Gastrocnemius medialis (tissue), 4 donors: ENCODE measurements at regions of chr14 and their contacts with region 1.

Region 1: GRCh38 chr14:55026793-55027561 is at the starts of genes SOCS4 and WDHD1:
- DNase-seq: peak; percentile 91
- ATAC-seq: peak; percentile 99
- H3K4me3 ChIP-seq: peak within 1 kb of the TSS; percentile 75 to 85 (median 80)
- H3K27ac ChIP-seq: peak within 1 kb of the TSS; percentile 84 to 94 (median 88)
- H3K4me1 ChIP-seq: peaks cover 25 to 29% of the 10 kb centered on the region in 2 donors
- H3K27me3 ChIP-seq: no peaks in the 10 kb centered on the region
- CTCF ChIP-seq: peak in 3 of 5 experiments; percentile 21 to 24 (median 22)
- POLR2A ChIP-seq: peak; percentile 61 to 65
- total RNA-seq, gene SOCS4: 9.7 to 19.3 (median 14.3) TPM
- total RNA-seq, gene WDHD1: 0.72 to 1.2 (median 1.0) TPM

Region 2: DNA sequence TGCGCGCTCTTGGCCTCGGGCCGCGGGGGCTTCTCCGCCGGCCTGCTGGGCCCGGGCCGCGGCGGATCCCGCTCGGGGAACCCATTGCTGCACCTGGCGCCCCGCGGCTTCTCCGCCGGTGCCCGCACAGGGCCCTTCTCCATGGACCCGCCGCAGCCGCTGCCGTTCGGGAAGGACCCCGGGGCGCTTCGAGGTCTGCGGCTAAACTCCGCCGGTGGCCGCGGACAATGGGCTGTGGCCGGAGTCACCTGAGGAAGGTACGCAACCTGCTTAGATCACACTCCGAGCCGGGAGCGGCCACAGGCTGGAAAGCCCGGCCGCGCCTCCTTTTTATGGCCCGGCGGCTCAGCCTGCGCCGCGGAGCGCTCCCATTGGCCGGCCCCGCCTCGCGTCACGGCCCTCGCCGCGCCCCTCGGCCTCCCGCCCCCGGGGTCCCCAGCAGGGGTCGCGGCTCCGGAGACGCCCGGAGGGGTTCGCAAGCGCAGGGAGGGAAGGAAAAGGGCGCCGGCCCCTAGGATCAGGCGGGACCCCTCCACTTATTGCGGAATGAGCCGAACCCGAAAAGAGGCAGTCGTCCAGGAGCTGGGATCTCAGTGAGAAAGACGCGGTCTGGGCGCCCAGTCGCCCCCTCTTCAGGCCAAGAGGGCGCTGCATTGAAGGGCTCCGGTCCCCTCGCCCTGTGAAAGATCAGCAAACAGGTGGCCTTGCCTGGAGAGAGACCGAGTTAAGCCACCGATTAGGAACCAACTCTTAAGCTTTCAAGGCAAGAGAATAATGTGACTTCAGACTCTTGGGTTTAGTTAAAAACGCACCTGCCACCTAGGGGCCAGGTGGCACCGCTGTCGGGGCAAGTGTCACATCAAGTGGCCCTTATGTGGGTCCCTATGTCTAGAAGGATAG is 124.2 kb before region 1 on chr14 and contains the start of gene GCH1:
- in situ Hi-C with region 1: no loop called
- intact Hi-C with region 1: loop called (anchors 10 kb)
- DNase-seq: peak; percentile 9 to 14
- ATAC-seq: peak; percentile 81 to 88
- H3K4me3 ChIP-seq: peak within 1 kb of the TSS; percentile 68 to 79 (median 74)
- H3K27ac ChIP-seq: peak within 1 kb of the TSS; percentile 62 to 75 (median 73)
- H3K4me1 ChIP-seq: no peaks in the 10 kb centered on the region
- H3K27me3 ChIP-seq: peaks cover 0 to 3% (median 0%) of the 10 kb centered on the region in 3 donors
- CTCF ChIP-seq: peak in 2 of 5 experiments; percentile 28 to 32
- POLR2A ChIP-seq: peak; percentile 61 to 86
- total RNA-seq, gene GCH1: 0.53 to 1.6 (median 0.92) TPM

Region 3: GRCh38 chr14:55051426-55052268 is 24.7 kb after region 1 on chr14 and contains the start of gene MAPK1IP1L:
- in situ Hi-C with region 1: no loop called
- intact Hi-C with region 1: loop called (anchors 1 kb)
- DNase-seq: peak; percentile 76 to 86
- ATAC-seq: peak; percentile 93 to 94
- H3K4me3 ChIP-seq: peak within 1 kb of the TSS; percentile 92 to 97 (median 96)
- H3K27ac ChIP-seq: peak within 1 kb of the TSS; percentile 98 to 100 (median 99)
- H3K4me1 ChIP-seq: peaks cover 17 to 31% of the 10 kb centered on the region in 2 donors
- H3K27me3 ChIP-seq: no peaks in the 10 kb centered on the region
- CTCF ChIP-seq: peak; percentile 96 to 100 (median 100)
- POLR2A ChIP-seq: peak; percentile 93 to 96
- total RNA-seq, gene MAPK1IP1L: 49.9 to 91.4 (median 68.0) TPM

Region 4: GRCh38 chr14:55354500-55354899 is 327.5 kb after region 1 on chr14:
- in situ Hi-C with region 1: no loop called
- intact Hi-C with region 1: no loop called
- DNase-seq: peak; percentile 27 to 59
- ATAC-seq: peak; percentile 79 to 91
- H3K4me3 ChIP-seq: no peak overlapping the region
- H3K27ac ChIP-seq: peak overlapping the region in 3 of 4 donors; percentile 64 to 74 (median 71)
- H3K4me1 ChIP-seq: peaks cover 11 to 14% of the 10 kb centered on the region in 2 donors
- H3K27me3 ChIP-seq: no peaks in the 10 kb centered on the region
- CTCF ChIP-seq: peak; percentile 40 to 67 (median 57)
- POLR2A ChIP-seq: no peak